ENCODE measurements at regions of chr14 and their contacts with region 1.

Region 1: DNA sequence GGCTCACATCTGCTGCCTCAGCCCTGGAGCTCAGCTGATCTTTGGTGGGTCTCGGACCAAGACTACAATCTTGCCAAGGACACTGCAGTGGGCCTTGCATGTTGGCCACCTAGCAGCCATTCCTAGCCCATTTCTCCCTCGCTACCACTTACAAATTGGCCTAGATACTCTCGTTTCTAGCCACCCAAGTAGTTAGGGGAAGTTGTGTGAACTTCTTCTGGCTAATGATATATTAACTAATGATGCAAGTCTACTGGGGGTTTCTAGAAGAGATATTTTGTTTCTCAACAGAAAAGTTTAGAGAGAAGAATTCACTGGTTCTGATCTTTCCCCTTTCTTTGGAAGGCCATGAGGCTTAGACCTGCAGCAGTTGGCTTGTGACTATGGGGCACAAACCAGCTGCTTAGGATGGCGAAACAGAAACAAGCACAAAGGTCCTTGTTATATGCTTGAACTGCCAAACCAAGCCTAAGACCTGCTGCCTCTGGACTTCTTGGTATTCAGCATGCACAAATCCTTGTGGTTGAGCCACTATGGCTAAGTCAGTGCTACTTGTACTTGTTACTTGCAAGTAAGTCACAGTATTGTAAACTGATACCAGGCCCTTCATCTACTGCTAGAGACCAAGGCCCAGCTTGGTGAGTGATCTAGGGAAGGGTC is 30.5 kb upstream of the GPATCH2L start:
- DNase-seq: no peak
- ATAC-seq: no peak
- H3K4me3 ChIP-seq: no peak overlapping the region
- H3K27ac ChIP-seq: no peak overlapping the region
- H3K4me1 ChIP-seq: no peaks in the 10 kb centered on the region
- H3K27me3 ChIP-seq: peaks cover 24% of the 10 kb centered on the region; the same call in 1 of the 2 replicates
- CTCF ChIP-seq: no peak

Region 2: GRCh38 chr14:75822522-75823141 is 298.6 kb before region 1 on chr14:
- CTCF ChIA-PET with region 1: no interaction called
- POLR2A ChIA-PET with region 1: no interaction called
- intact Hi-C with region 1: no loop called
- DNase-seq: peak; percentile 81
- ATAC-seq: peak; percentile 80
- H3K4me3 ChIP-seq: no peak overlapping the region; the same call in 1 of the 2 replicates
- H3K27ac ChIP-seq: peak overlapping the region; percentile 97
- H3K4me1 ChIP-seq: peaks cover 52% of the 10 kb centered on the region
- H3K27me3 ChIP-seq: no peaks in the 10 kb centered on the region
- CTCF ChIP-seq: no peak

Region 3: DNA sequence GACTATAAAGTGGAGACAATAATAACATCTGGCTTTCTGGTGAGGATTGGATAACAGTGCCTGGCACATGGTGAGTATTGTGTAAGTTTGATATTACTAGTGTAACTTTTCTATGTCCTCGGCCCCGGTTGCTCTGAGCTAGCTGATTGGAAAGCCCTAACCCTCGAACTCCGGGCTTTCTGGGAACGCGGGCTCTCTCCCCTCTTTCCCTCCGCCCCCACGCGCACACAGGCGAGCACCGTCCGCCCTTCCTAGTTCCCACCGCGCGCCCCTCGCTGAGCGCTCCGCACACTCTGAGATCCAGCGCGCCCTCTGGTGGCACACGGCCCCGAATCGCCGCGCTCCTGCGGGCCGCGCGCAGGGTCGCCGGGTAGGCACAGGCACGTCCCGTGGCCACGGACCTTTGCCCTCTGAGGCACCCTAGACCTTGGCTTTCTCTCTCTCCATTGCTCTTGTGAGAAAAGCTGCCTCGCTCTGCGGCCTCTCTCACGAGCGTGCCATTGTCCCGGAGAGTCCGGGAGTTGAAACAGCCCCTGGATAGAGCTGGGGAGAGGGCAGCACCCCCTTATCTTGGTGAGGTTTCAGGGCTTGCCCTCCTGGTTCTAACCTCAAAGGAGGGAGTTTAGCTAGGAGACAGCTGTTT is 231.5 kb after region 1 on chr14:
- CTCF ChIA-PET with region 1: no interaction called
- POLR2A ChIA-PET with region 1: no interaction called
- intact Hi-C with region 1: loop called (anchors 10 kb)
- DNase-seq: peak; percentile 30
- ATAC-seq: peak; percentile 51
- H3K4me3 ChIP-seq: no peak overlapping the region
- H3K27ac ChIP-seq: no peak overlapping the region
- H3K4me1 ChIP-seq: peaks cover 6% of the 10 kb centered on the region
- H3K27me3 ChIP-seq: 0 out of 2 replicates have a peak, but pooled peaks cover 6% of the 10 kb centered on the region
- CTCF ChIP-seq: peak; percentile 83